ENCODE measurements at regions of chr5 and their contacts with region 1.

Region 1: GRCh38 chr5:142713121-142713706 is 27.3 kb upstream of the FGF1 start:
- DNase-seq: peak; percentile 59 to 94

Region 2: DNA sequence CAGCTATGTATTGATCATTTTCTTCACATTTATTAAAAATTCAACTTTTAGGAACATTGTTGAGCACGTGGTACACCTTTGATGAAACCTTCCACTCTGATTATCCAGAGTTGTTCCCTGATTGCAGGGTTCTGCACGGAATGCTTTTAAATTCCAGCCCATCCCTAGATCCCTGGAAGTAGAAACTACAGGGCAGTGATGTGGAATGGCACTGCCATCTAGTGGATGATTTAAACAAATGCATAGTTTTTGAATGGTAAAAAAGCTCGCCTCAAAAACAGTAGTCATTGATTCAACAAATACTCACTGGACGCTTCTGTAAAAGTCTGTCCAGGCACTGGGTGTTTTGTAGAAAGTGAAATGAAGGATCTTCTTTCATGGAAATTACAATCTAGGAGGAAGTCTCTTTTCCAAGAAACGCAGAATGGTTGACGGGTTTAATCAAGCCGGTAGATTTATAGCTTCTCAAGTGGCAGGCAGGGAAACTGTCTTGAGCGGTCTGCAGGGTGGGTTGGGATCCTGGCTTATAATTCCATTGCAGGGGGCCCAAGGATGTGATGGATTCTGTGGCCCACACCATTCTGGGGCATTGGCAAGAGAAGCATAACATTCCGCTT is 175.4 kb after region 1 on chr5:
- in situ Hi-C with region 1: loop called (anchors 25 kb)
- DNase-seq: peak; percentile 42 to 76